Panc1 (cell line): ENCODE measurements at regions of chr1 and their contacts with region 1.

Region 1: DNA sequence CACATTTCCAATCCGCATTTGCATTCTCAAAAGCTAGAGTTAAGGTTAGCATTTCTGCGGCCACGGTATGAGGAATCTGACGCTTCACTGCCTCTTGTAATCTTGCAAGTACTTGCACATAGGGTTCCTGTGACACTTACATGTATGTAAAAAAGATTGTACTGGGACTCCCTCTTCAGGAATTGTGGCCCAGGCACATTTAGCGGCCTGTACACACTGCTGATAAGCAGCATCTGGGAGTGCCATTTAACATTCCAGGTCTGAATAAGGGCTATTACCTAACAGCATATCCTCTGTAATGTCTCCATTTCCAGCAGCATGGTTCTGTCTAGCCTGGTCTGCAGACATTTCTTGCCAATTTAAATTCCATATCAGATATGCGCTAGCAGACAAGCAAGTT is 75.7 kb downstream of the AXDND1 start:
- DNase-seq: no peak
- ATAC-seq: no peak
- H3K4me3 ChIP-seq: no peak overlapping the region
- H3K27ac ChIP-seq: no peak overlapping the region
- H3K4me1 ChIP-seq: no peaks in the 10 kb centered on the region
- H3K27me3 ChIP-seq: no peaks in the 10 kb centered on the region; the same call in 1 of the 2 replicates
- CTCF ChIP-seq: no peak

Region 2: DNA sequence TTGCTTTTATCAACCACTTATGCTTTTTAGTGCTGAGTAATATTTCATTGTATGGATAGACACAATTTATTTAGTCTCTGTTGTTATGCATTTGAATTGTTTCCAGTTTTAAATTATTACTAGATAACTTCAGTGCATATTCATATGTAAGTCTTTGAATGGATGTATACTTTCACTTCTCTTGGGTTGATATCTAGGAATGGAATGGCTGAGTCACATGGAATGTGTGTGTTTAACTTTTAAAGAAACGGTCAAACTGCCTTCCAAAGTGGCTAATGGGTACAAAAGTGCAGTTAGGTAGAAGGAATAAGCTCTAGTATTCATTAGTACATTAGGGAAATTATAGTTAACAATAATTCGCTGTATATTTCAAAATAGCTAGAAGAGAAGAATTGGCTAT is 51.8 kb after region 1 on chr1:
- CTCF ChIA-PET with region 1: no interaction called
- POLR2A ChIA-PET with region 1: no interaction called
- in situ Hi-C with region 1: no loop called
- intact Hi-C with region 1: loop called (anchors 10 kb)
- DNase-seq: no peak
- ATAC-seq: no peak
- H3K4me3 ChIP-seq: no peak overlapping the region
- H3K27ac ChIP-seq: no peak overlapping the region
- H3K4me1 ChIP-seq: no peaks in the 10 kb centered on the region
- H3K27me3 ChIP-seq: peaks cover 3% of the 10 kb centered on the region; the same call in 1 of the 2 replicates
- CTCF ChIP-seq: no peak